Thyroid gland (tissue), 4 donors: ENCODE measurements at regions of chr16 and their contacts with region 1.

Region 1: GRCh38 chr16:589658-590159 is at the start of gene RAB40C:
- DNase-seq: peak; percentile 99
- H3K4me3 ChIP-seq: peak within 1 kb of the TSS; percentile 85 to 98 (median 94)
- H3K27ac ChIP-seq: peak within 1 kb of the TSS; percentile 89 to 97 (median 92)
- H3K4me1 ChIP-seq: peaks cover 45 to 61% of the 10 kb centered on the region in 2 donors
- H3K27me3 ChIP-seq: no peaks in the 10 kb centered on the region
- CTCF ChIP-seq: peak in 1 of 6 experiments; percentile 6
- POLR2A ChIP-seq: peak in 1 of 2 donors; percentile 47
- total RNA-seq, gene RAB40C: 17.7 to 24.4 (median 18.4) TPM

Region 2: GRCh38 chr16:630815-631405 is 41.2 kb after region 1 on chr16 and contains the start of gene WFIKKN1:
- intact Hi-C with region 1: loop called (anchors 5 kb)
- DNase-seq: peak; percentile 56 to 65
- H3K4me3 ChIP-seq: no peak within 1 kb of the TSS
- H3K27ac ChIP-seq: no peak within 1 kb of the TSS
- H3K4me1 ChIP-seq: peaks cover 11 to 24% of the 10 kb centered on the region in 2 donors
- H3K27me3 ChIP-seq: no peaks in the 10 kb centered on the region
- CTCF ChIP-seq: no peak
- POLR2A ChIP-seq: no peak
- total RNA-seq, gene WFIKKN1: 0.13 to 1.8 (median 0.77) TPM